Dorsolateral prefrontal cortex (tissue), 120 donors: ENCODE measurements at regions of chr13 and their contacts with region 1.

Region 1: DNA sequence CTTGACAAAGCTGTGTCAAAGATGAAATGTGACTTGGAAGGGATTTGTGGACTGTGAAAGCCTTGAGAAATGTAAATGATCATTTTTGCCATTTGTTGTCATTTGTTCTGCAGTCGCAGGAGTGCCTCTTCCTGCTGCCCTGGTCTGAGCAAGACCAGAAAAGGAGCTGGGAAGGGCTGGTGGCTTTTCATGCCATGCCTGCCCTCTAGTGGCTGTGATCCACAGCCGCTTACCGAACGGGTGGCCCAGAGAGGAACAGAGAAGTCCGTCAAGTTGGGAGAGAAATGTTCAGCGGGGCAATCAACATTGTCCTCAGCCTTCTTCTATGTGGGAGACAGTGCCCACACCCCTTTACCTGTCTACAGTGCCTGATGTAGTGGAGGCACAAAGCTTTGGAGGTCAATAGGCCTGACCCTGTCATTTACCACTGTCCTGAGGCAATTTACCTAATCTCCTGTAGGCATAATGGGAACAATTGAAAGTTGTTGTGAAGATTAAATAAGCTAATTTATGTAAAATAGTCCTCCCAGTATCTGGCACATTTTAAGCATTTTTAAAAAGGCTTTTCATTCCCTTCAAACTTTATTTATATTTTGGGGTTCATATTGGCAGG is 224.4 kb downstream of the B3GLCT start:
- DNase-seq: peak; percentile 37 to 83 (median 71)
- H3K4me3 ChIP-seq: no peak overlapping the region
- H3K27ac ChIP-seq: no peak overlapping the region
- H3K27me3 ChIP-seq: no peaks in the 10 kb centered on the region
- CTCF ChIP-seq: peak; percentile 51 to 91 (median 83)

Region 2: GRCh38 chr13:31174018-31174417 is 250.2 kb before region 1 on chr13:
- intact Hi-C with region 1: loop called (anchors 5 to 10 kb)
- DNase-seq: no peak
- H3K4me3 ChIP-seq: no peak overlapping the region
- H3K27ac ChIP-seq: no peak overlapping the region
- H3K27me3 ChIP-seq: no peaks in the 10 kb centered on the region
- CTCF ChIP-seq: peak in 49 of 56 donors; percentile 13 to 76 (median 48)

Region 3: DNA sequence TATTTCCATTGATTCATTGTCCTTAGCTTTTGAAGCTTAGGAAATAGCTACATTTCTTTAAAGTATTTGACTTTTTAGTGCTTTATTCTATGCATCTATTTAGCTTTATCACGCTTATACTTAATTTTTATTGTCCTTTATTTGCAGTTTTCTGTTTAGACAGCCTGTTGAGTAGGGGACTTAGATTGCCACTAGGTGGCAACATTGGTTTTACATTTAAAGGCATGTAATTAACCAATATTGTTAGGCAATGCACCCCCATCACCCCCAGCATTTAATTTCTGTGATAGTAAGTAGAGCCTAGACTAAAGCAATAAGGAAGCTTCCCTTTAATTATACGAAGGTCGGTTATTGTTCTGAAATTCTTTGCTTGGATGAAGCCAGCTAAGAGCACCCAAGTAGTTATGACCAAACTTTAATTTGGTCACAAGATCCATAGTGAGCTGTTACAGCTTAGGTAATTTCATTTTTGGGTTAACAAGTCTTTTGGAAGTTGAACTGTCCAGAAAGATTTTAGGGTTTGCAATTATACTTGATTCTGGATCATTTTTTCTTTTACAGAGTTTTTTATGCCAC is 187.9 kb before region 1 on chr13:
- intact Hi-C with region 1: loop called (anchors 2 to 5 kb)
- DNase-seq: no peak
- H3K4me3 ChIP-seq: no peak overlapping the region
- H3K27ac ChIP-seq: no peak overlapping the region
- H3K27me3 ChIP-seq: no peaks in the 10 kb centered on the region
- CTCF ChIP-seq: peak; percentile 51 to 85 (median 71)

Region 4: GRCh38 chr13:31610270-31610998 is 186.2 kb after region 1 on chr13:
- intact Hi-C with region 1: no loop called
- DNase-seq: no peak
- H3K4me3 ChIP-seq: no peak overlapping the region
- H3K27ac ChIP-seq: no peak overlapping the region
- H3K27me3 ChIP-seq: no peaks in the 10 kb centered on the region
- CTCF ChIP-seq: no peak

Region 5: GRCh38 chr13:31706105-31706504 is 281.9 kb after region 1 on chr13:
- intact Hi-C with region 1: no loop called
- DNase-seq: no peak
- H3K4me3 ChIP-seq: no peak overlapping the region
- H3K27ac ChIP-seq: no peak overlapping the region
- H3K27me3 ChIP-seq: peaks cover 0 to 3% (median 0%) of the 10 kb centered on the region in 45 donors
- CTCF ChIP-seq: no peak